HCT116 (cell line): ENCODE measurements at regions of chr1 and their contacts with region 1.

Region 1: GRCh38 chr1:39816415-39817090 is 27.9 kb upstream of the BMP8B start:
- DNase-seq: peak; percentile 61
- ATAC-seq: peak; percentile 89
- H3K4me3 ChIP-seq: no peak overlapping the region
- H3K27ac ChIP-seq: no peak overlapping the region
- H3K4me1 ChIP-seq: peaks cover 0 to 15% of the 10 kb centered on the region in 2 experiments; a peak in 3 of 4 replicates
- H3K27me3 ChIP-seq: no peaks in the 10 kb centered on the region
- CTCF ChIP-seq: peak; percentile 76 to 86 (median 85)
- POLR2A ChIP-seq: no peak
- RAD21 ChIP-seq: peak; percentile 89

Region 2: DNA sequence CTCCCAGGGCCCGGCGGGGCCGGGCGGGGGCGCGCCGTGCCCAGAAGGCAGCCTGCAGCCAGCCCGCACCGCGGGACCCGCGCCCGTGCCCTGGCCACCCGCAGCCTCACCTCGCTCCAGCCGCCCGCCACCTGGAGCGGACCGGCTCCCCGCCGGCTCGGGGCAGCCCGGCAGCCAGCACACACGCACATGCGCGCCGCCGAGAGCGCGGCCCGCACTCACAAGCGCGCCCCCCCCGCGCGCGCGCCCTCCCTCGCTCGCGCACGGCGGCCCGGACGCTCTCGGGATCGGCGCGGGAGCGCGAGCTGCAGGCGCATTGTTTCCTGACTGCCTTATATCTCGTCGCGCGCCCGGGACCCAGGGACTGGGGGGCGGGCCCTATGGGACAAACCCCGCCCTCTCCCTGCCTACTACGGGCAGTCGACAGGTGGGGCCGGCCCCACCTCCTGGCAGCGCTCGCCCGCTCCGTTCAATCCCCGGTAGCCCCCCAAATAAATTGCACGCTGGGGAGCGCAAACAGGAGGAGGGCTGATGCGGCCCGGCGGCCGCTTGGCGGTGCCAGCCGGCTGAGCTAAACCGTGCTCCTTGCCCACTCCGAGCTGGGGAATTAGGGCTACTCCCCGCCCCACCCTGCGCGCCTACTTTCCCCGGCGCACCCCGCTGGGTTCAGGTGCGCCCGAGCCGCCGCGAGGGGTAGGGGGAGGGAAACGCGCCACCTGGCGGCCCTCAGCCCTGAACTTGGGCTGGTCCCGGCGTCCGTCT is 85.3 kb after region 1 on chr1 and contains the start of gene MYCL:
- CTCF ChIA-PET with region 1: interaction called, 21 read pairs
- POLR2A ChIA-PET with region 1: no interaction called
- RAD21 ChIA-PET with region 1: interaction called in 1 of 2 experiments, 8 read pairs
- intact Hi-C with region 1: loop called (anchors 1 kb)
- DNase-seq: peak; percentile 87
- ATAC-seq: peak; percentile 93
- H3K4me3 ChIP-seq: peak within 1 kb of the TSS; percentile 72 to 76
- H3K27ac ChIP-seq: peak within 1 kb of the TSS; percentile 58; the same call in 1 of the 2 replicates
- H3K4me1 ChIP-seq: peaks cover 18 to 33% of the 10 kb centered on the region in 2 experiments
- H3K27me3 ChIP-seq: no peaks in the 10 kb centered on the region
- CTCF ChIP-seq: peak; percentile 76 to 87 (median 78)
- POLR2A ChIP-seq: peak; percentile 60
- RAD21 ChIP-seq: peak; percentile 82
- total RNA-seq, gene MYCL: 10.0 TPM

Region 3: GRCh38 chr1:39973503-39974135 is 157.1 kb after region 1 on chr1:
- CTCF ChIA-PET with region 1: interaction called, 16 read pairs
- POLR2A ChIA-PET with region 1: no interaction called
- RAD21 ChIA-PET with region 1: no interaction called
- intact Hi-C with region 1: loop called (anchors 1 kb)
- DNase-seq: peak; percentile 45
- ATAC-seq: peak; percentile 89
- H3K4me3 ChIP-seq: no peak overlapping the region
- H3K27ac ChIP-seq: no peak overlapping the region
- H3K4me1 ChIP-seq: peaks cover 6 to 9% of the 10 kb centered on the region in 2 experiments; a peak in 3 of 4 replicates
- H3K27me3 ChIP-seq: no peaks in the 10 kb centered on the region
- CTCF ChIP-seq: peak; percentile 96 to 99 (median 98)
- POLR2A ChIP-seq: no peak
- RAD21 ChIP-seq: peak; percentile 98

Region 4: DNA sequence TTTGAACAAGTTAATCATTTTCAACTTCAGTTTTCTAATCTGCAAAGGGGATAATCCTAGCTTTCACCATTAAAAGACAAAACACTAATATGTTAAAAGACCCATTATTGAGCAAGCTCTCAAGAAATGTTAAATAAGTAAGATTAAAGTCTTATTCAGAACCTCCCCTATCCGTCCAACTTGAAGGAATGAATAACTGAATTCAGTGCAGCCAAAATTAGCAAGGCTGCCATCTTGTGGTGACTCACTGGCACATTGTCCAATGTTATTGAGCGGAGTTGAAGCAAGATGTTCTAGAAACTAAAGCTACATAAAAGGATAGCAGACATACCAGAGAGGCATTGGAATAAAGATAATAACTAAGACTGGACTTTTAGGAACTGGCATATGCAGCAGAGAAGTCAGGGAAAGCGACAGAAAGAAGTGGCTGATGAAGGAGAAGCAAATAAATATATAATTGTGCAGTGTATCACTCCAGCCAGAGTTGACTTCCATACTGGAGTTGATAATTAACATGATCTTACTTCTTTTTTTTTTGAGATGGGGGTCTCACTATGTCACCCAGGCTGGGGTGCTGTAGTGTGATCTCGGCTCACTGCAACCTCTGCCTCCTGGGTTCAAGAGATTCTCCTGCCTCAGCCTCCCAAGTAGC is 215.8 kb after region 1 on chr1:
- CTCF ChIA-PET with region 1: interaction called, 3 read pairs
- POLR2A ChIA-PET with region 1: no interaction called
- RAD21 ChIA-PET with region 1: interaction called in 1 of 2 experiments, 3 read pairs
- intact Hi-C with region 1: loop called (anchors 2 kb)
- DNase-seq: peak; percentile 35
- ATAC-seq: peak; percentile 89
- H3K4me3 ChIP-seq: no peak overlapping the region
- H3K27ac ChIP-seq: no peak overlapping the region
- H3K4me1 ChIP-seq: peaks cover 0 to 5% of the 10 kb centered on the region in 2 experiments; a peak in 1 of 4 replicates
- H3K27me3 ChIP-seq: no peaks in the 10 kb centered on the region
- CTCF ChIP-seq: peak; percentile 27 to 73 (median 69); a peak in 5 of 6 replicates
- POLR2A ChIP-seq: no peak
- RAD21 ChIP-seq: peak; percentile 75